Caco-2 (cell line): ENCODE measurements at regions of chr1 and their contacts with region 1.

Region 1: DNA sequence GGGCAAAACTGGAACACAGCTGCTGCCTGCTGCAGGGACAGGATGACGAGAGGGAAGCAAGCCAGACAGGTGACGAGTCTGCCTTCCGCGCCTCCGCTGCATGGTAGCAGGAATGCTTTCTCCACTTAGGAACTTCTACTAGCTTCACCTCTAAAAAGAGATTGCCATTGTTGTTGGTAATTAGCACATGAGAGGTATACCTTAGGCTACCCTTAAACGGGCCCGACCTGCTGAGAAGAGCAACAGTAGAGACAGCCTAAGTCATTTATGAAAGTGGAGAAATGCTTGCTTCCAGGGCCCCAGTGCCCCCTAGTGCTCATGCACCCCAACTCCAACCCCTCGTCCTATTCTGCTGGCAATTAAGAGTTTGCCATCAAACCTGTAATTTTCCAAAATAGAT is 96.9 kb upstream of the AKT3 start:
- DNase-seq: peak in 1 of 2 experiments; percentile 35
- H3K4me3 ChIP-seq: no peak overlapping the region
- H3K4me3 Mint-ChIP-seq: no peak overlapping the region
- H3K27ac Mint-ChIP-seq: no peak overlapping the region
- H3K4me1 ChIP-seq: peaks cover 35% of the 10 kb centered on the region
- H3K4me1 Mint-ChIP-seq: peaks cover 5% of the 10 kb centered on the region
- H3K27me3 ChIP-seq: no peaks in the 10 kb centered on the region
- H3K27me3 Mint-ChIP-seq: no peaks in the 10 kb centered on the region
- CTCF ChIP-seq: peak; percentile 12 to 29

Region 2: GRCh38 chr1:243713470-243714186 is 233.3 kb before region 1 on chr1:
- CTCF ChIA-PET with region 1: no interaction called
- POLR2A ChIA-PET with region 1: no interaction called
- intact Hi-C with region 1: loop called (anchors 2 kb)
- DNase-seq: no peak
- H3K4me3 ChIP-seq: no peak overlapping the region
- H3K4me3 Mint-ChIP-seq: no peak overlapping the region
- H3K27ac Mint-ChIP-seq: no peak overlapping the region
- H3K4me1 ChIP-seq: no peaks in the 10 kb centered on the region
- H3K4me1 Mint-ChIP-seq: no peaks in the 10 kb centered on the region
- H3K27me3 ChIP-seq: no peaks in the 10 kb centered on the region
- H3K27me3 Mint-ChIP-seq: no peaks in the 10 kb centered on the region
- CTCF ChIP-seq: no peak

Region 3: GRCh38 chr1:243903895-243904294 is 43.1 kb before region 1 on chr1:
- CTCF ChIA-PET with region 1: interaction called, 5 read pairs
- POLR2A ChIA-PET with region 1: no interaction called
- intact Hi-C with region 1: loop called (anchors 1 kb)
- DNase-seq: peak in 1 of 2 experiments; percentile 24
- H3K4me3 ChIP-seq: no peak overlapping the region
- H3K4me3 Mint-ChIP-seq: no peak overlapping the region
- H3K27ac Mint-ChIP-seq: no peak overlapping the region
- H3K4me1 ChIP-seq: peaks cover 23% of the 10 kb centered on the region
- H3K4me1 Mint-ChIP-seq: peaks cover 19% of the 10 kb centered on the region
- H3K27me3 ChIP-seq: no peaks in the 10 kb centered on the region
- H3K27me3 Mint-ChIP-seq: no peaks in the 10 kb centered on the region
- CTCF ChIP-seq: no peak

Region 4: GRCh38 chr1:244021947-244022700 is 75.2 kb after region 1 on chr1:
- CTCF ChIA-PET with region 1: no interaction called
- POLR2A ChIA-PET with region 1: no interaction called
- intact Hi-C with region 1: no loop called
- DNase-seq: no peak
- H3K4me3 ChIP-seq: no peak overlapping the region
- H3K4me3 Mint-ChIP-seq: no peak overlapping the region
- H3K27ac Mint-ChIP-seq: no peak overlapping the region
- H3K4me1 ChIP-seq: no peaks in the 10 kb centered on the region
- H3K4me1 Mint-ChIP-seq: peaks cover 7% of the 10 kb centered on the region
- H3K27me3 ChIP-seq: no peaks in the 10 kb centered on the region; the same call in 1 of the 2 replicates
- H3K27me3 Mint-ChIP-seq: peaks cover 3% of the 10 kb centered on the region
- CTCF ChIP-seq: no peak